SK-N-SH (cell line): ENCODE measurements at regions of chr1 and their contacts with region 1.

Region 1: DNA sequence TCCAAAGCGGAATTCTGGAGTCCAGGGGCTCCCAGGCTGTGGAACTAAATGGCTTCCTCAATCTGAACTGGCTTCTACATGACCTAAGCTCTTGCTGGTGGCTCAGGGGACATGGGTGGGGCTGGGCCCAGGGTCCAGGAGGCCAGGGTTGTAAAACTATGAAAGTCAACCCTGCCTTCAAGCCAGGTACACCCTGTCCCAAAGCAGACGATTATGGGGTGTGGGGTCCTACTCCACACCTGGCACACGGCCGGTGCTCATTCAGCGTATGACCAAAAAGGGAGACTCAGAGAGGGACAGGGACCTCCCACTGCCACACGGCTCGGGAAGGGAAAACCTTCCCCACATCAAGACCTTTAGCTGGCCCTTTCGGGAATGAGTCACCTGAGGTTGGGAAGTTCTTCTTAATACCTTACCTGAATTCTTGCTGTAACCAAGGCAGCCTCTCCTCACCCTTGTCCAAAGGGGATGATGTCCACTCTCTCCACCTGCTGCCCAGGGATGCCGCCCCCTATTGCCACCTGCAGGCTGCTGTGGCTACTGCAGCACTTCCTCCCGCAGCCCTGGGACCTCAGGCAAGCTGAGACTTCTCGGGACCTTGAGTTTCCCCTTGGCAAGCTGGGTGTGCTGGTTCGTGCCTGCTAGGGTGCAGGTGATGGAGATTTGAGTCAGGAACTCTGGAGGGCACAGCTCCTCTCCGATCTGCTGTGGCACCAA is 32.2 kb downstream of the RUNX3 start:
- DNase-seq: peak; percentile 87
- H3K4me3 ChIP-seq: no peak overlapping the region
- H3K27ac ChIP-seq: no peak overlapping the region
- H3K4me1 ChIP-seq: peaks cover 0 to 2% of the 10 kb centered on the region in 2 experiments; a peak in 1 of 4 replicates
- H3K27me3 ChIP-seq: no peaks in the 10 kb centered on the region; the same call in 1 of the 2 replicates
- CTCF ChIP-seq: peak; percentile 81
- EP300 ChIP-seq: no peak
- RAD21 ChIP-seq: peak; percentile 65

Region 2: GRCh38 chr1:24874611-24875234 is 23.2 kb before region 1 on chr1:
- CTCF ChIA-PET with region 1: interaction called, 13 read pairs
- POLR2A ChIA-PET with region 1: no interaction called
- DNase-seq: no peak
- H3K4me3 ChIP-seq: no peak overlapping the region
- H3K27ac ChIP-seq: no peak overlapping the region
- H3K4me1 ChIP-seq: no peaks in the 10 kb centered on the region
- H3K27me3 ChIP-seq: no peaks in the 10 kb centered on the region
- CTCF ChIP-seq: no peak
- EP300 ChIP-seq: no peak
- RAD21 ChIP-seq: no peak

Region 3: DNA sequence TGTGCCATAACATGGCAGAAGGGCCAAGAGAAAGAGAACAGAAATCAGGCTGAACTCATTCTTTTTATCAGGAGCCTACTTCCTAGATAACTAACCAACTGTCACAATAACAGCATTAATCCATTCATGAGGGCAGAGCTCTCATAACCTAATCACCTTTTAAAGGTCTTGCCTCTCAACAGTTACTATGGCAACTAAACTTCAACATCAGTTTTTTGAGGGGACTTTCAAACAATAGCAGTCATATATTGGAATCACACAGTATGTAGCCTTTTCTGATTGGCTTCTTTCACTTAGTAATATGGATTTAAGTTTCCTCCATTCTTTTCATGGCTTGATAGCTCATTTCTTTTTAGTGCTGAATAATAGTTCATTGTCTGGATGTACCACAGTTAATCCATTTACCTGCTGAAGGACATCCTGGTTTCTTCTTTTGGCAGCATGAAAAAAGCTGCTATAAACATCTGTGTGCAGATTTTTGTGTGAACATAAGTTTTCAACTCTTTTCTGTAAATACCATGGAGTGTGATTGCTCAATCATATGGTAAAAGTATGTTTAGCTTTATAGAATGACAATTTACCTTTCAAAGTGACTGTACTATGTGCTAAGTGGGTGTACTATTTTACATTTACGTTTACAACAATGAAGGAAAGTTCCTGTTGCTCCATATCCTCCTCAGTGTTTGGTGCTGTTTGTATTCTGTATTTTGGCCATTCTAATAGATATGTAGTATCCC is 17.1 kb before region 1 on chr1:
- CTCF ChIA-PET with region 1: interaction called, 31 read pairs
- POLR2A ChIA-PET with region 1: no interaction called
- DNase-seq: no peak
- H3K4me3 ChIP-seq: no peak overlapping the region
- H3K27ac ChIP-seq: no peak overlapping the region
- H3K4me1 ChIP-seq: no peaks in the 10 kb centered on the region
- H3K27me3 ChIP-seq: no peaks in the 10 kb centered on the region
- CTCF ChIP-seq: no peak
- EP300 ChIP-seq: no peak
- RAD21 ChIP-seq: no peak

Region 4: DNA sequence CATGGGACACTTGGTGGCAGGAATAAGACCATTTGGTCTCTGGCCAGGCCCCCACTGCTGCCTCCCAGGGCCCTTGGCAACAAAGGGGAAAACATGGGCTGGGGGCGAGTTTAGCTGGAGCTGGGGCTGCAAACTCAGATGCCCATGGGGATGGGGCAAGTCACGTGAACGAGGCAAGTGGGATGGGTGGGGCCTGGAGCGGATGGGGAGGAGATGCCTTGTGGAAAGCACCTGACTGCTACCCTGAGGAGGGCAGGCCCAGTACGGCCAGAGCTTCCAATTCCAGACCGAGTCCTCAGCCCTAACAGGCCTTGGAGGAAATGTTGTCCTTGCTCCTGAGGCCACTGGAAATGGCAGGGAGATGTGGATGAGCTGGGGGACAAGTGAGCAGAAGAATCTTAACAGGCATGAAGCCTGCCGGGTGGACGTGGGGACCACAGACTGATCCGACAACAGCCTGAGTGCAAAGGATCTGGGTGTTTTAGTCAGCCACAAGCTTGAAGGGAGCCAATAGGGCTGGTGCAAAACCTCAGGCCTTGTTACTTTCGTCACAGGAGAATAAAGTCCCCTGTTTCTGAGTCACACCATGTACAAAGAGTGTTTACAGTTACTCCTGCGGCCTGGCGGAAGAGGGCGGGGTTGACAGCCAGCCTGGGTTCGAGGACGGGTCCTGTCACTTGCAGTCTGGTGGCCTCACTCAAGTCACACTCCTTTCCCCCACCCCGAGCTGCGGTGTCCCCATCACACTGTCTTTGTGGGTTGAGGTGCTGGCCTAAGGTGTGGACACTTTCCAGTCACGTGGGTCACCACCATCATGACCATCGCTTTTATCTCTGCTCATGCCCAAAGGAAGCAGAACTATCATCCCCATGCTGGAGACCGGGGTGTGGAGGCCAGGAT is 13.1 kb after region 1 on chr1:
- CTCF ChIA-PET with region 1: interaction called, 29 read pairs
- POLR2A ChIA-PET with region 1: no interaction called
- DNase-seq: no peak
- H3K4me3 ChIP-seq: no peak overlapping the region
- H3K27ac ChIP-seq: no peak overlapping the region
- H3K4me1 ChIP-seq: peaks cover 0 to 30% of the 10 kb centered on the region in 2 experiments; a peak in 1 of 4 replicates
- H3K27me3 ChIP-seq: no peaks in the 10 kb centered on the region
- CTCF ChIP-seq: no peak
- EP300 ChIP-seq: no peak
- RAD21 ChIP-seq: no peak